Transverse colon (tissue), 4 donors: ENCODE measurements at regions of chr15 and their contacts with region 1.

Region 1: DNA sequence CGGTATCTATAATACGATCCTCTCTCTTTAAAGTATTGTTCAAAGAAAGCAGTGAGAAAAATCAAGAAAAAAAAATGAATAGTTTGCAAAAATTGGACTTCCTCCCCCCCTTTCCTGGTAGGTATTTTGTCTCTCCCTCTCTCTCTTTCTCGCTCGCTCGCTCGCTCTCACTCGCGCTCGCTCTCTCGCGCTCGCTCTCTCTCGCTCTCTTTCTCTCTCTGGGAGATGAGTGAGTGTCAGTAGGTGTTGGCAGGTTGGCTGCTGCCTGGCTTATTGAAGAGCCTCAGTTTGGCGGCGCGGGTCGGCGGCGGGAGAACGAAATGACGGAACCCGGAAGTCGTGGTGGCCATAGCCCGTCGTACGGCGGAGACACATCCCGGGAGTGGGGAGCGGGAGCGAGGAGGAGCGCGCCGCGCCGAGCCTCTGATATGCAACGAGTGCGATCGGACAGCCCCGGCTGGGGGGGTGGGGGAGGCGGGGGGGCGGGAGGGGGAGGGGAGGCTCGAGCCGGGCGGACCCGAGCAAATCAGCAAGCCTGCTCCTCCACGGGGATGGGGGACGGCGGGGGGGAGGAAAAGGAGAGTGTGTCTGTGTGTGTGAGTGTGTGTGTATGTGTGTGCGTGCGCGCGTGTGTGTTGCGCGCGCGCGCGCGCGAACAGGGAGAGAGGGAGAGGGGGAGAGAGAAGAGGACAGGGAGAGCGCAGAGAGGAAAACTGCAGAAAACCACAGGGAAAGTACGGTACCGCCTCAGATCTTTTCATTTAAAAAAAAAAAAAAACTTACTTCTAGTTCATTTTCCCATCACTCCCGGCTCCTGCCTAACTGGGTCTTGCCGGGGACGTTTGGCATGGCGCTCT is at the start of gene MEIS2:
- DNase-seq: peak; percentile 81
- H3K4me3 ChIP-seq: peak within 1 kb of the TSS; percentile 48 to 72 (median 66)
- H3K27ac ChIP-seq: peak within 1 kb of the TSS; percentile 82 to 98 (median 90)
- H3K4me1 ChIP-seq: peaks cover 0 to 29% (median 4%) of the 10 kb centered on the region in 4 donors
- H3K27me3 ChIP-seq: peaks cover 93% of the 10 kb centered on the region
- CTCF ChIP-seq: no peak
- EP300 ChIP-seq: no peak
- POLR2A ChIP-seq: peak; percentile 54
- total RNA-seq, gene MEIS2: 16.5 to 43.4 (median 32.7) TPM

Region 2: DNA sequence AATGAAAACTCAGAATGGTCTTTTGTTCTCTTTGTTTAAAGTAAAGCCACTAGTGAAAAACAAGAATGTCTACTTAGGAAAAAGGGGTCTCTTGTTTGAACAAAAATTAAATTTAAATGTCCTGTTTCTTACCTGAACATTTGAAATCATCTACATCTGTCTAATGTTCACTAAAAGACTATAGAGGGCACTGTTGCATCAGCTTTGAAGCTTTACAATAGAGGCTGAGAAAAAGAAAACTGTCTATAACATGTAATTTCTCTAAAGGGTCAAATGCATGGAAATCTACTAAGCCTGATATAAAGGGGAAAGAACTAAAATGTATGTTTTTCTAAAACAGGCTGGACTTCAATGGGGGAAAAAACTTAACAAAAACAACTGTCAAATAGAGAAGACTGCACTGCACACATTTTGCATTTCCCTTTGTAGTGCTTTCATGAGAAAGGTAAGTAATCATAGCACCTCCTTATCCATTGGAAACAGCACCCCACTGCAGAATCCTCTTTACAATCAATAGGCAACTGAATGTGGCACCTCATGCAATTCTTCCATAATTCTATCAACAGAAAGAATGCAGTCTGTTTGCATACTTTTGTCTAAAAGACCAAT is 1580.7 kb before region 1 on chr15:
- in situ Hi-C with region 1: loop called in 1 of 4 experiments (anchors 25 kb)
- intact Hi-C with region 1: no loop called
- DNase-seq: no peak
- H3K4me3 ChIP-seq: no peak overlapping the region
- H3K27ac ChIP-seq: no peak overlapping the region
- H3K4me1 ChIP-seq: peaks cover 0 to 3% (median 0%) of the 10 kb centered on the region in 4 donors
- H3K27me3 ChIP-seq: no peaks in the 10 kb centered on the region
- CTCF ChIP-seq: peak; percentile 37 to 66 (median 49)
- EP300 ChIP-seq: no peak
- POLR2A ChIP-seq: no peak

Region 3: GRCh38 chr15:36601497-36601932 is 498.8 kb before region 1 on chr15:
- in situ Hi-C with region 1: no loop called
- intact Hi-C with region 1: loop called (anchors 10 kb)
- DNase-seq: peak; percentile 32
- H3K4me3 ChIP-seq: no peak overlapping the region
- H3K27ac ChIP-seq: peak overlapping the region; percentile 56 to 80 (median 68)
- H3K4me1 ChIP-seq: peaks cover 0 to 8% (median 7%) of the 10 kb centered on the region in 4 donors
- H3K27me3 ChIP-seq: no peaks in the 10 kb centered on the region
- CTCF ChIP-seq: no peak
- EP300 ChIP-seq: no peak
- POLR2A ChIP-seq: no peak

Region 4: DNA sequence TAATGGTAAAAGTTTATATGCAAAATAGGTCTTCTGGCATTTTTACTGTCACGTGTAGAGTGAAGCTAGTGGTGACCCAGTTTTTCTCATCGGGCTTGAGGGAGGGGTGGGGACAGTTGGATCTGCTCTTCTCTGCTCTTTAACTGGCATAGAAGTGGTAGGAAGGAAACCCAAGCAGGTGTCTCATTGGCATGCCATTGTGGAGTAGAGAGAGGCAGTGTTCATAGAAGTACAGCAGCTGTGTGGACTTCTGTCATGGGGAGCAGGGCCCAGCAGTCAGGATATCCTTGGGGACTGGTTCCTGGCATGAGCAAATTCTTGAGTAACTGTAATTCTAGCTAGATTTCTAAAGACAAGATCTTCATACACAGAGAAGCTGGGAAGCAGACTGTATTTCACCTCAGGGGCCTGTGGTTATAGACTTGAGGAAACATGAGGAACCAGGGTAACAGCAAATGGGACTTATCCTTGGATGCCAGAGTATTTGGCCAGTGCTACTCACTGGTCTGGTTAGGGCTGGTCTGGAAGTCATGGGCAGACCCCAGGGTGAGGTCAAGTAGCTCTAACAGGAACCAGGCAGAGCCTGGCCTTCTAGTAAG is 478.0 kb before region 1 on chr15:
- in situ Hi-C with region 1: no loop called
- intact Hi-C with region 1: no loop called
- DNase-seq: no peak
- H3K4me3 ChIP-seq: no peak overlapping the region
- H3K27ac ChIP-seq: no peak overlapping the region
- H3K4me1 ChIP-seq: no peaks in the 10 kb centered on the region
- H3K27me3 ChIP-seq: no peaks in the 10 kb centered on the region
- CTCF ChIP-seq: no peak
- EP300 ChIP-seq: no peak
- POLR2A ChIP-seq: no peak

Region 5: GRCh38 chr15:36883713-36884517 is 216.4 kb before region 1 on chr15:
- in situ Hi-C with region 1: loop called (anchors 10 to 25 kb)
- intact Hi-C with region 1: loop called (anchors 5 kb)
- DNase-seq: peak; percentile 82
- H3K4me3 ChIP-seq: peak overlapping the region in 1 of 4 donors; percentile 26
- H3K27ac ChIP-seq: peak overlapping the region in 3 of 4 donors; percentile 15 to 83 (median 76)
- H3K4me1 ChIP-seq: peaks cover 0 to 16% (median 2%) of the 10 kb centered on the region in 4 donors
- H3K27me3 ChIP-seq: peaks cover 100% of the 10 kb centered on the region
- CTCF ChIP-seq: peak; percentile 75 to 89 (median 82)
- EP300 ChIP-seq: no peak
- POLR2A ChIP-seq: no peak

Region 6: DNA sequence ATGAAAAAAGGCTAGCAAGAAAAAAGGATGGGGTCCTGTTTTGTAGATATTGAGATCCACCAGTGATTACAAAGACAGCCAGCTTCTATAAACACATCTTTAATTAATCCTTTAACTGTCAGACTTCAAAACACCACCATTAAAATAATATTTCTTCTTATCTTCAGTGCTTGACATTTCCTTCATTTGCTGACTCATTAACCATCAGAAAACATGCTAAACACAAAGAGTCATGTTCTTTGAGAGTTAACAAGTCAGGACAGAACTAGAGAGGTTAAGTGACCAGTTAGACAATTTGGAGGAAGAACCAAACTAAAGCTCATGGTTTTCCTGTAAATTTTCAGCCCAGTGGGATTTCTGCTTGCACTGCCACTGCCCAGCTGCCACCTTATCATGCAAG is 111.4 kb before region 1 on chr15:
- in situ Hi-C with region 1: no loop called
- intact Hi-C with region 1: no loop called
- DNase-seq: no peak
- H3K4me3 ChIP-seq: no peak overlapping the region
- H3K27ac ChIP-seq: no peak overlapping the region
- H3K4me1 ChIP-seq: no peaks in the 10 kb centered on the region
- H3K27me3 ChIP-seq: no peaks in the 10 kb centered on the region
- CTCF ChIP-seq: no peak
- EP300 ChIP-seq: no peak
- POLR2A ChIP-seq: no peak

Region 7: GRCh38 chr15:37134699-37135131 is 34.4 kb after region 1 on chr15:
- in situ Hi-C with region 1: no loop called
- intact Hi-C with region 1: loop called (anchors 5 kb)
- DNase-seq: no peak
- H3K4me3 ChIP-seq: no peak overlapping the region
- H3K27ac ChIP-seq: no peak overlapping the region
- H3K4me1 ChIP-seq: no peaks in the 10 kb centered on the region
- H3K27me3 ChIP-seq: peaks cover 6% of the 10 kb centered on the region
- CTCF ChIP-seq: peak; percentile 57 to 79 (median 67)
- EP300 ChIP-seq: no peak
- POLR2A ChIP-seq: no peak

Region 8: DNA sequence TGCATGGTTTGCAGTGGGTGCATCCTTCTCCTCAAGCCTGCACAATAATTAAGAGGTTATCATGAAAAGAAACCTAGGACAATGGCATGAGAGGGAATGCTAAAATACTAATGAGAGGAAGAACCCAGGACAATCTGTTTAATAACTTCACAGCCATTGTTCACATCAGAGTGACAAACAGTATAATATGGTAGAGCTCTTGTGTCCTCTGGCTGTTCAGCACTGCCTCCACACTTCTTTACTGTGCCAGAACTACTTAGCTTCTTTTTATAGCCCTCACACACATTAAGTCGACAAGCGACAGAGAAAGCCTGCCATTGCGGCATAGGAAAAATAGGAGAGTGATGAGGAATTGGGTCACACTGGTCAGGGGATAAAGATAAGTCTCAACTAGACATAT is 65.1 kb after region 1 on chr15:
- in situ Hi-C with region 1: no loop called
- intact Hi-C with region 1: no loop called
- DNase-seq: no peak
- H3K4me3 ChIP-seq: no peak overlapping the region
- H3K27ac ChIP-seq: no peak overlapping the region
- H3K4me1 ChIP-seq: no peaks in the 10 kb centered on the region
- H3K27me3 ChIP-seq: no peaks in the 10 kb centered on the region
- CTCF ChIP-seq: no peak
- EP300 ChIP-seq: no peak
- POLR2A ChIP-seq: no peak